Uterus (tissue), 4 donors: ENCODE measurements at regions of chr3 and their contacts with region 1.

Region 1: GRCh38 chr3:66816090-66816761 is 181.9 kb upstream of the KBTBD8 start:
- DNase-seq: no peak
- H3K4me3 ChIP-seq: no peak overlapping the region
- H3K27ac ChIP-seq: no peak overlapping the region
- H3K4me1 ChIP-seq: no peaks in the 10 kb centered on the region
- H3K27me3 ChIP-seq: no peaks in the 10 kb centered on the region
- CTCF ChIP-seq: peak; percentile 54 to 76 (median 68)
- POLR2A ChIP-seq: no peak

Region 2: DNA sequence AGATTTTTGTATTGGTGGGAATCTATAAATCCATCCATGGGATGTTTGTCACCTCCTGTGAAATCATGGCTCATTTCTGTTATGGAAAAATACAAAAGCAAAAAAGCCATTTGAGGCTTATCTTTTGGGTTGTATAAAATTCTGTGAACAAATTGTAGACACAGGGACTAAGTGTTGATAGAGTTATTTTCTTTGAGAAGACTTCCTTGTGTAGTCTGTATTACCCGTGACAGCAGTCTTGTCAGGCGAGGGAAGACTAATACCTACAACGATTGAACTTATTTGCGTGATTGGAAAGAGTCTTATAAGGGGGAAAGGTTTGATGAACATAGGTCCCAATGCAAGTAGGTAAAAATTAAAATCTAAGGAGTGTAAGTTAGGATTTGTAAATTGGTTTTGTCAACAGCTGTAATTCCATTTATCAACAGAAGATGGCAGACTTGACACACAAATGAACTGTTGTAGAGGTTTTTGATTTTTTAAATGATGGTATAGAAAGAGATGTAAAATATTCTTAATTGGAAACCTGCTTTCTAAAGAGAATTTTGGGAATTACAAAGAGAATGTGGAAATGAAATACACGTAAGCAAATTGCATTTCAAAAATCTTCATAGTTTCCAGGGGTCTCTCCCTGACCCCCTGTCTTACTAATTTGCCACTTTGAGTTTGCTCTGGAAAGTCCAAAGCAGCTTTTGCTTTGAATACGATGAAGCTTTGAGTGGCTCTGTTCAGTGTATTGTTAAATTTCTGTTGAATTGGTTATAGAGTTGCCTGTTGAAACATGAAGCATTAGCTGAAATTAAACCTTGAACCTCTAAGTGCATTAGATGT is 562.2 kb before region 1 on chr3:
- intact Hi-C with region 1: loop called (anchors 10 kb)
- DNase-seq: no peak
- H3K4me3 ChIP-seq: no peak overlapping the region
- H3K27ac ChIP-seq: no peak overlapping the region
- H3K4me1 ChIP-seq: no peaks in the 10 kb centered on the region
- H3K27me3 ChIP-seq: no peaks in the 10 kb centered on the region
- CTCF ChIP-seq: peak; percentile 61 to 75 (median 72)
- POLR2A ChIP-seq: no peak

Region 3: GRCh38 chr3:66407611-66408218 is 408.5 kb before region 1 on chr3:
- intact Hi-C with region 1: loop called (anchors 10 kb)
- DNase-seq: peak; percentile 68 to 74
- H3K4me3 ChIP-seq: no peak overlapping the region
- H3K27ac ChIP-seq: no peak overlapping the region
- H3K4me1 ChIP-seq: no peaks in the 10 kb centered on the region
- H3K27me3 ChIP-seq: no peaks in the 10 kb centered on the region
- CTCF ChIP-seq: peak; percentile 79 to 93 (median 87)
- POLR2A ChIP-seq: no peak

Region 4: DNA sequence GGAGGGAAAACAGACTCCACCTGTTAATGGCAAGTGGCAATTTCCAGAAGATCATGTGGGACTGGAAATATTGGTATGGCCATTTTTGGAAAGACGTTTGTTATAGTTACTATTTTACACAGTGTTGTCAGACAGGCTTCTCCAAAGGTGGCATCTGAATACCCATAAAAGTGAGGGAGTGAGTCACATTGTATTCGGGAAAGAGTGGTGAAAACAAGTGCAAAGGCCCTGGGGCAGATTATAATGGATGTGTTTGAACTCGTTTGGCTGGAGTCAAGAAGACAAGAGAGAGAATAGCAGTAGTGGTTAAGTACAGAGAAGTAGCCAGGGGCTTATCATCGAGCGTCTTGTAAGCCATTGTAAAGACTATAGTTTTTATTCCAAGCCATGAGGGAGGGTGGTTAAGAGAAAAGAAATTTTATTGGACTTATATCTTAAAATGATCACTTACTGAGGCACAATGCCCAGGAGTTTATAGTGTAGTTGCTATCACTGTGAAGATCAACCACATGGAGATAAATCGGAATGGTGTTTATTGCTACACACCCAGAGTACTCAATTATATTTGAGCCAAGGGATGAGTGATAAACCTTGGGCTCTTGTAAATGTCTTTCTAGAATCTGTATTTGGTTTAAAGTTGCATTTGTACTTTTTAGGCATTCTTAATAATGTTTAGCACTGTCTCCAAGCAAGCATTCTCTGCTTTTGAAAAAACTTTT is 30.9 kb before region 1 on chr3:
- intact Hi-C with region 1: no loop called
- DNase-seq: no peak
- H3K4me3 ChIP-seq: no peak overlapping the region
- H3K27ac ChIP-seq: no peak overlapping the region
- H3K4me1 ChIP-seq: no peaks in the 10 kb centered on the region
- H3K27me3 ChIP-seq: no peaks in the 10 kb centered on the region
- CTCF ChIP-seq: no peak
- POLR2A ChIP-seq: no peak

Region 5: GRCh38 chr3:66858656-66859381 is 42.6 kb after region 1 on chr3:
- intact Hi-C with region 1: no loop called
- DNase-seq: no peak
- H3K4me3 ChIP-seq: no peak overlapping the region
- H3K27ac ChIP-seq: no peak overlapping the region
- H3K4me1 ChIP-seq: no peaks in the 10 kb centered on the region
- H3K27me3 ChIP-seq: no peaks in the 10 kb centered on the region
- CTCF ChIP-seq: no peak
- POLR2A ChIP-seq: no peak

Region 6: GRCh38 chr3:66923969-66924368 is 107.7 kb after region 1 on chr3:
- intact Hi-C with region 1: no loop called
- DNase-seq: no peak
- H3K4me3 ChIP-seq: no peak overlapping the region
- H3K27ac ChIP-seq: no peak overlapping the region
- H3K4me1 ChIP-seq: no peaks in the 10 kb centered on the region
- H3K27me3 ChIP-seq: no peaks in the 10 kb centered on the region
- CTCF ChIP-seq: no peak
- POLR2A ChIP-seq: no peak